Panc1 (cell line): ENCODE measurements at regions of chr19 and their contacts with region 1.

Region 1: GRCh38 chr19:41263850-41264580 is at the start of gene HNRNPUL1:
- DNase-seq: peak; percentile 99
- ATAC-seq: peak; percentile 85
- H3K4me3 ChIP-seq: peak within 1 kb of the TSS; percentile 76 to 95
- H3K27ac ChIP-seq: peak within 1 kb of the TSS; percentile 97
- H3K4me1 ChIP-seq: peaks cover 18% of the 10 kb centered on the region
- H3K27me3 ChIP-seq: no peaks in the 10 kb centered on the region
- CTCF ChIP-seq: no peak; the same call in 1 of the 2 replicates
- total RNA-seq, gene HNRNPUL1: 183 TPM

Region 2: GRCh38 chr19:41205994-41206393 is 58.0 kb before region 1 on chr19:
- CTCF ChIA-PET with region 1: interaction called, 5 read pairs
- POLR2A ChIA-PET with region 1: no interaction called
- in situ Hi-C with region 1: no loop called
- intact Hi-C with region 1: loop called (anchors 2 kb)
- DNase-seq: no peak
- ATAC-seq: 0 out of 2 replicates have a peak, but pooled peaks have one; percentile 24
- H3K4me3 ChIP-seq: no peak overlapping the region
- H3K27ac ChIP-seq: no peak overlapping the region
- H3K4me1 ChIP-seq: no peaks in the 10 kb centered on the region
- H3K27me3 ChIP-seq: no peaks in the 10 kb centered on the region
- CTCF ChIP-seq: no peak